PC-3 (cell line): ENCODE measurements at regions of chr18 and their contacts with region 1.

Region 1: GRCh38 chr18:72530622-72531021 is 13.5 kb downstream of the CBLN2 start:
- DNase-seq: no peak
- ATAC-seq: no peak
- H3K4me3 ChIP-seq: no peak overlapping the region
- H3K27ac ChIP-seq: no peak overlapping the region
- H3K4me1 ChIP-seq: no peaks in the 10 kb centered on the region
- H3K27me3 ChIP-seq: peaks cover under 1% of the 10 kb centered on the region
- CTCF ChIP-seq: peak; percentile 43

Region 2: DNA sequence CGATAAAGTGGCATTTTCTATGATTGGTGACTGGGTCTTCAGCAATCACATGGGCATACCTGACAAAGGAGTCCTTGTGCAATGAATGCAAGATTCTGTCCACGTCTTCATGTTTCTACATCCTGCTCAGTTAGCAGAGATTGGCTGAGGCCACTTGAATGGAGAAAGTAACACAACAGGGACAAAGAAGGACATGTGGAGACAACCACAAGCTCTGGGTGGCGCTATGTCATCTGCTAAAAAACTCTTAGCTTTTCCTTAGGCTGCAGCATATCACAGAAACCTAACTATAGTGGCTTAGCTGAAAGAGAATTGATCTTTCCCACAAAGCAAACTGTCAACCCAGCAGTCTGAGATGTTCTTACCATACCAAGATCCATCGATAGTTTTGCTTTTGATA is 1132.1 kb before region 1 on chr18:
- CTCF ChIA-PET with region 1: no interaction called
- POLR2A ChIA-PET with region 1: no interaction called
- intact Hi-C with region 1: loop called (anchors 5 kb)
- DNase-seq: peak; percentile 52
- ATAC-seq: peak; percentile 64
- H3K4me3 ChIP-seq: no peak overlapping the region
- H3K27ac ChIP-seq: no peak overlapping the region
- H3K4me1 ChIP-seq: no peaks in the 10 kb centered on the region
- H3K27me3 ChIP-seq: no peaks in the 10 kb centered on the region
- CTCF ChIP-seq: peak; percentile 55

Region 3: GRCh38 chr18:72492497-72492896 is 38.1 kb before region 1 on chr18:
- CTCF ChIA-PET with region 1: no interaction called
- POLR2A ChIA-PET with region 1: no interaction called
- intact Hi-C with region 1: no loop called
- DNase-seq: no peak
- ATAC-seq: no peak
- H3K4me3 ChIP-seq: no peak overlapping the region
- H3K27ac ChIP-seq: no peak overlapping the region
- H3K4me1 ChIP-seq: no peaks in the 10 kb centered on the region
- H3K27me3 ChIP-seq: no peaks in the 10 kb centered on the region
- CTCF ChIP-seq: no peak

Region 4: GRCh38 chr18:72572896-72573295 is 42.3 kb after region 1 on chr18:
- CTCF ChIA-PET with region 1: no interaction called
- POLR2A ChIA-PET with region 1: no interaction called
- intact Hi-C with region 1: no loop called
- DNase-seq: no peak
- ATAC-seq: 0 out of 2 replicates have a peak, but pooled peaks have one; percentile 33
- H3K4me3 ChIP-seq: no peak overlapping the region
- H3K27ac ChIP-seq: no peak overlapping the region
- H3K4me1 ChIP-seq: no peaks in the 10 kb centered on the region
- H3K27me3 ChIP-seq: peaks cover 44% of the 10 kb centered on the region
- CTCF ChIP-seq: no peak

Region 5: GRCh38 chr18:72672364-72673184 is 142.0 kb after region 1 on chr18:
- CTCF ChIA-PET with region 1: no interaction called
- POLR2A ChIA-PET with region 1: no interaction called
- intact Hi-C with region 1: no loop called
- DNase-seq: peak; percentile 62
- ATAC-seq: peak; percentile 38; the same call in 1 of the 2 replicates
- H3K4me3 ChIP-seq: no peak overlapping the region
- H3K27ac ChIP-seq: no peak overlapping the region
- H3K4me1 ChIP-seq: no peaks in the 10 kb centered on the region
- H3K27me3 ChIP-seq: peaks cover 26% of the 10 kb centered on the region
- CTCF ChIP-seq: peak; percentile 83